ENCODE measurements at regions of chr7 and their contacts with region 1.

Region 1: DNA sequence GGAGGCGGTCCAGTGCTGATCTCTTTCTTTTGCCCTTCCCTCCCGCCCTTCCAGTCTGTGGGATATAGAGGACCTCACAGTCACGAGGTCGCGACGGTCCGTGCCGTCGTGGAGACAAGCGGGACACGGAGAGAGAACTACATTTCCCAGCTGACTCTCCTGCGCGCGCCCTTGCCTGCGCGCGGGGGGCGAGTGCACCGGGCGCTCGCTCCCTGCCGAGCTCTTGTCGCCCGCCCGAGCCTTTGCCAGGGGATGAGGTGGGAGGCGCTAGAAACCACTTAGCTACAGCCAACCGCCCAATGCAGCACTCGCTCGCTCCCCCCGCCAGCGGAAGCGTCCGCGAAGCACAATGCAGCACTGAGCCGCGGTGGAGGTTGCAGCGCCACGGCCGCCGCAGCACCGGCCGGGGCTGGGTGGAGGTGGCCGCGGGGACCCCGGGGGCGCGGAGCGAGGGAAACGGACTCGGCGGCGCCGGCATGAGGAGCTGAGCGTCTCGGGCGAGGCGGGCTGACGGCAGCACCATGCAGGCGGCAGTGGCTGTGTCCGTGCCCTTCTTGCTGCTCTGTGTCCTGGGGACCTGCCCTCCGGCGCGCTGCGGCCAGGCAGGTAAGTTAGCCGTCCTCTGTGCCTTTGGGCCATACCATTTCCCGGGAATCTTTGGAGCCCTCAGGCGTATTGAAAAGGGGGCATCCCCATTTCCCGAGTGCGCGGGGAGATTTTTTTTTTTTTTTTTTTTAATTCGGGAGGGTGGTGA is at the start of gene ADAM22:
- DNase-seq: peak; percentile 77 to 87
- H3K4me3 ChIP-seq: peak within 1 kb of the TSS; percentile 76 to 87 (median 80)
- H3K27ac ChIP-seq: peak within 1 kb of the TSS; percentile 33; the same call in 1 of the 2 replicates
- H3K4me1 ChIP-seq: peaks cover 0 to 6% (median 3%) of the 10 kb centered on the region in 4 experiments; a peak in 4 of 7 replicates
- H3K27me3 ChIP-seq: peaks cover 0 to 3% (median 1%) of the 10 kb centered on the region in 4 experiments; a peak in 1 of 7 replicates
- CTCF ChIP-seq: peak in 1 of 3 experiments; percentile 4; a peak in 1 of 4 replicates
- EP300 ChIP-seq: no peak
- POLR2A ChIP-seq: peak; percentile 87
- RAD21 ChIP-seq: peak in 1 of 2 experiments; percentile 3; a peak in 1 of 4 replicates
- total RNA-seq, gene ADAM22: 17.9 and 21.4 TPM in 2 replicates

Region 2: DNA sequence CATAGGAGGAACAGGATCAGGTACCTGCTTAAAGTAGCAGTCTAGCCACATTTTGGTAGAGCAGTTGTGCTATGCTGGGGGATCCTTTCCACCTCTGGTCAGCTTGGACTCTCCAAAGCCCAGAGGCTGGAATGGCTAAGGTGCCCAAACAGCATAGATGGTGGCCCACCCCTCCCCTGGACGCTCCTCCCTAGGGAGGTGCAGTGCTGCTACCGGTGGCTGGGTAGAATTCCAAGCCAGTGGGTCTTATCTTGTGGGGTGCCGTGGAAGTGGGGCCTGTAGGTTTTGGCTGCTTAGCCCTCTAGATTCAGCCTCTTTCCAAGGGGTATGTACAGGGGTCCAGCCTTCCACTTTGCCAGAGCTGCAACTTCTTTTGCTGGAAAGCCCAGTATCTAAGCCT is 261.9 kb before region 1 on chr7:
- CTCF ChIA-PET with region 1: no interaction called
- POLR2A ChIA-PET with region 1: no interaction called
- DNase-seq: no peak
- H3K4me3 ChIP-seq: no peak overlapping the region
- H3K27ac ChIP-seq: no peak overlapping the region
- H3K4me1 ChIP-seq: peaks cover 0 to 2% (median 0%) of the 10 kb centered on the region in 4 experiments; a peak in 1 of 7 replicates
- H3K27me3 ChIP-seq: no peaks in the 10 kb centered on the region
- CTCF ChIP-seq: no peak
- EP300 ChIP-seq: no peak
- POLR2A ChIP-seq: no peak
- RAD21 ChIP-seq: no peak

Region 3: GRCh38 chr7:87920578-87920977 is 13.5 kb before region 1 on chr7:
- CTCF ChIA-PET with region 1: interaction called, 4 read pairs
- POLR2A ChIA-PET with region 1: interaction called, 15 read pairs
- DNase-seq: no peak
- H3K4me3 ChIP-seq: no peak overlapping the region
- H3K27ac ChIP-seq: no peak overlapping the region
- H3K4me1 ChIP-seq: peaks cover 0 to 3% (median 0%) of the 10 kb centered on the region in 4 experiments; a peak in 1 of 7 replicates
- H3K27me3 ChIP-seq: no peaks in the 10 kb centered on the region
- CTCF ChIP-seq: peak in 2 of 3 experiments; percentile 9 to 16; a peak in 2 of 4 replicates
- EP300 ChIP-seq: no peak
- POLR2A ChIP-seq: no peak
- RAD21 ChIP-seq: peak in 1 of 2 experiments; percentile 12; a peak in 1 of 4 replicates

Region 4: DNA sequence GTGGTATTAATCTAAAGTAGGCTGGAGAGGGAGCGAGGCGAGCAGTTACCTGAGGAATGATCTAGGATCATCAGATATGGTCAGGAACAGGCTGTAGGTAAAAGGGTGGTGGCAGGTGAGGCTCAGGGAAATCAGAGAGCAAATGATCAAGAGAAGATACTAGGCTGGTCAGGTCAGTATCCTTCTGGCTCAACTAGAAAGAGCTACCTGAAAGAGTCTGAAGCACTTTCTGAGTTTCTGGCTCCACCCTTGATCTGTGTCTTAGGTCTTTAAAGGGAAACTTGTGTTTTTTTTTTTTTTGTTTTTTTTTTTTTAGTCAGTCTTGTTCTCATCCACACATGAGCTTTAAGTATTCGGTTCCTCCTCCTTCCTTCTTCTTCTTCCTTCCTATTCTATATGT is 10.4 kb after region 1 on chr7:
- CTCF ChIA-PET with region 1: interaction called, 3 read pairs
- POLR2A ChIA-PET with region 1: interaction called, 14 read pairs
- DNase-seq: no peak
- H3K4me3 ChIP-seq: no peak overlapping the region
- H3K27ac ChIP-seq: no peak overlapping the region
- H3K4me1 ChIP-seq: no peaks in the 10 kb centered on the region
- H3K27me3 ChIP-seq: no peaks in the 10 kb centered on the region
- CTCF ChIP-seq: no peak
- EP300 ChIP-seq: no peak
- POLR2A ChIP-seq: no peak
- RAD21 ChIP-seq: no peak

Region 5: GRCh38 chr7:88001744-88002530 is 67.8 kb after region 1 on chr7:
- CTCF ChIA-PET with region 1: no interaction called
- POLR2A ChIA-PET with region 1: no interaction called
- DNase-seq: no peak
- H3K4me3 ChIP-seq: no peak overlapping the region
- H3K27ac ChIP-seq: no peak overlapping the region
- H3K4me1 ChIP-seq: peaks cover 0 to 8% (median under 1%) of the 10 kb centered on the region in 4 experiments; a peak in 3 of 7 replicates
- H3K27me3 ChIP-seq: no peaks in the 10 kb centered on the region
- CTCF ChIP-seq: no peak
- EP300 ChIP-seq: no peak
- POLR2A ChIP-seq: no peak
- RAD21 ChIP-seq: no peak

Measured in H1 (cell line).